ENCODE measurements at regions of chr4 and their contacts with region 1.

Region 1: GRCh38 chr4:127616898-127617297 is 15.9 kb upstream of the INTU start:
- DNase-seq: no peak
- ATAC-seq: no peak
- H3K4me3 ChIP-seq: no peak overlapping the region
- H3K27ac ChIP-seq: no peak overlapping the region
- H3K4me1 ChIP-seq: no peaks in the 10 kb centered on the region
- CTCF ChIP-seq: no peak
- EP300 ChIP-seq: no peak
- POLR2A ChIP-seq: no peak
- RAD21 ChIP-seq: no peak

Region 2: GRCh38 chr4:127604949-127605709 is 11.8 kb before region 1 on chr4:
- CTCF ChIA-PET with region 1: interaction called, 18 read pairs
- POLR2A ChIA-PET with region 1: no interaction called
- DNase-seq: peak in 1 of 2 experiments; percentile 20
- ATAC-seq: peak; percentile 30 to 47; a peak in 3 of 6 replicates
- H3K4me3 ChIP-seq: no peak overlapping the region
- H3K27ac ChIP-seq: no peak overlapping the region
- H3K4me1 ChIP-seq: no peaks in the 10 kb centered on the region
- CTCF ChIP-seq: peak; percentile 62; the same call in 2 of the 3 replicates
- EP300 ChIP-seq: no peak
- POLR2A ChIP-seq: no peak
- RAD21 ChIP-seq: peak; percentile 64 to 75

Measured in A549 (cell line).